Activated CD4-positive, alpha-beta T cell treated with anti-CD3 and anti-CD28 coated beads, Interleukin-2, amount 10 ng/mL, durations not matched to agents 24 days and 14 days (primary cell): ENCODE measurements at regions of chr10 and their contacts with region 1.

Region 1: DNA sequence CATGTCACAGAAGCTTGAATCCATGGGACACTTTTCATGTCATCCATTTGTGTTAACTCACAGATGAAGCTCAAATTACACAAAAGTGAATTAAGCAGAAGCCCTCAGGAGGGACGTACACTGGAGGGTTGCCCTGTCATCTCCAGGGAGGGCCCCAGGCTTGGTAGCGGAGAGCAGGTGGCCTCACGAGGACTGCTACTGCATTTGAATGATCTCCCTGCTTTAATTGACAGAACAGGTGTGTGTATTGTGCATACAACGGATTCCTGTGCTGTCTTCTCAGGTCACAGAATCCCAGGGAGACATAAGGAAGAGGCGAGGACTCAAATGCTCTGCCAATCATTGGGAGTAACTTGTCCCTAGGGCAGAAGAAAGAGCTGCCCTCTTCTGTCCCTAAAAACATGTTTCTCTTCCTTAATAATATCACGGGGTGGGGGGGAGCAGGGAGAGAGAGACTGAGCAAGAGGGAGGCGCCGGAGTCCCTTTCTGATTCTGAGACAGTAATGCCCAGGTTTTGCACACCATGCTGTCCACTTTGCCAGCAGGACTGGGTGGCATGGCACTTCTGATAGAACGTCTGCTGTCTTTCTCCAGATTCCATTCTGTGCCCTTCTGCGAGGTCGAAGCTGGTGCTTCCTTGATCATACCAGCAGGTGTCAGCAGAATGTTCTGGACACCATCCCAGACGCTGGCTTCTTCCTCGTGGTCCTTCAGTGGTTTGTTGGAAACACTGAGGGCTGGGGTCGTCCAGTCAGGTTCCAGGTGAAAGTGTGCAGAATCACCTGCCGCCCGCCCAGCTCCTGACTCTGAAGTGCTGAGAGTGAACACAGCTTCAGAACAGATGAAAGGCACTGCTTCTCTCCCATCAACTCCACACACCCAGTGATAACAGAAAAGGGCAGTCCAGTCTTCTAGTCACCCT is 26.2 kb upstream of the RASGEF1A start:
- DNase-seq: peak; percentile 86
- H3K4me3 Mint-ChIP-seq: peak overlapping the region; percentile 63
- H3K27ac Mint-ChIP-seq: peak overlapping the region; percentile 51
- H3K4me1 Mint-ChIP-seq: peaks cover 50% of the 10 kb centered on the region
- H3K27me3 Mint-ChIP-seq: no peaks in the 10 kb centered on the region

Region 2: GRCh38 chr10:43082746-43083145 is 210.3 kb before region 1 on chr10:
- intact Hi-C with region 1: no loop called
- DNase-seq: no peak
- H3K4me3 Mint-ChIP-seq: no peak overlapping the region
- H3K27ac Mint-ChIP-seq: no peak overlapping the region
- H3K4me1 Mint-ChIP-seq: peaks cover 2% of the 10 kb centered on the region
- H3K27me3 Mint-ChIP-seq: peaks cover 31% of the 10 kb centered on the region

Region 3: GRCh38 chr10:43229208-43230061 is 63.6 kb before region 1 on chr10:
- intact Hi-C with region 1: no loop called
- DNase-seq: peak; percentile 80
- H3K4me3 Mint-ChIP-seq: peak overlapping the region; percentile 77
- H3K27ac Mint-ChIP-seq: peak overlapping the region; percentile 69
- H3K4me1 Mint-ChIP-seq: peaks cover 43% of the 10 kb centered on the region
- H3K27me3 Mint-ChIP-seq: peaks cover 42% of the 10 kb centered on the region

Region 4: GRCh38 chr10:43304687-43305340 is 11.8 kb after region 1 on chr10:
- intact Hi-C with region 1: loop called (anchors 1 kb)
- DNase-seq: peak; percentile 86
- H3K4me3 Mint-ChIP-seq: peak overlapping the region; percentile 77
- H3K27ac Mint-ChIP-seq: peak overlapping the region; percentile 56
- H3K4me1 Mint-ChIP-seq: peaks cover 50% of the 10 kb centered on the region
- H3K27me3 Mint-ChIP-seq: peaks cover 26% of the 10 kb centered on the region